MCF 10A (cell line): ENCODE measurements at regions of chr2 and their contacts with region 1.

Region 1: GRCh38 chr2:188983427-188984064 is 9.4 kb downstream of the COL3A1 start:
- DNase-seq: peak; percentile 52
- H3K4me3 Mint-ChIP-seq: no peak overlapping the region
- H3K27ac Mint-ChIP-seq: no peak overlapping the region
- H3K4me1 Mint-ChIP-seq: no peaks in the 10 kb centered on the region
- H3K27me3 Mint-ChIP-seq: no peaks in the 10 kb centered on the region
- CTCF ChIP-seq: peak; percentile 43

Region 2: GRCh38 chr2:188971432-188971861 is 12.1 kb before region 1 on chr2:
- CTCF ChIA-PET with region 1: interaction called, 10 read pairs
- POLR2A ChIA-PET with region 1: no interaction called
- intact Hi-C with region 1: no loop called
- DNase-seq: no peak
- H3K4me3 Mint-ChIP-seq: no peak overlapping the region
- H3K27ac Mint-ChIP-seq: no peak overlapping the region
- H3K4me1 Mint-ChIP-seq: no peaks in the 10 kb centered on the region
- H3K27me3 Mint-ChIP-seq: no peaks in the 10 kb centered on the region
- CTCF ChIP-seq: no peak

Region 3: DNA sequence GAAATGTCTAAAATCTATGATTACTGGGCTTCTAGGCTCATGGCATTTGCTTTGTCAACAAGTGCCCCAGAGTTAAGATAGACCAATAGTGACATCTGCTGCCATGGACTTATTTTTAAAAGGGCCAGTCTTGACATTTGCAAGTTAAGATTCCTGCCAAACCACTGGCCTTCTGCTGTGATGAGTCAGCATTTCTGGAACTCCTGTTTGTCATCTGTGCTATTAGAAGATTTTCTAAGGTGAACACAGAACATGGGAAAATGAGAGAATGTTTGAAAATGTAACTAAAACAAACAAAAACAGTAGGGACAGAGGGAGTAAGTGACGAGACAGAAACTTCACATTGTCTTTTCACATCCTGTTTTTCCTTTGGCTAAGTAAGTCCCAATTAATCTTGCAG is 364.0 kb after region 1 on chr2:
- CTCF ChIA-PET with region 1: no interaction called
- POLR2A ChIA-PET with region 1: no interaction called
- intact Hi-C with region 1: loop called (anchors 10 kb)
- DNase-seq: peak; percentile 85
- H3K4me3 Mint-ChIP-seq: no peak overlapping the region
- H3K27ac Mint-ChIP-seq: peak overlapping the region; percentile 55
- H3K4me1 Mint-ChIP-seq: peaks cover 17% of the 10 kb centered on the region
- H3K27me3 Mint-ChIP-seq: no peaks in the 10 kb centered on the region
- CTCF ChIP-seq: no peak